ENCODE measurements at regions of chr6 and their contacts with region 1.

Region 1: DNA sequence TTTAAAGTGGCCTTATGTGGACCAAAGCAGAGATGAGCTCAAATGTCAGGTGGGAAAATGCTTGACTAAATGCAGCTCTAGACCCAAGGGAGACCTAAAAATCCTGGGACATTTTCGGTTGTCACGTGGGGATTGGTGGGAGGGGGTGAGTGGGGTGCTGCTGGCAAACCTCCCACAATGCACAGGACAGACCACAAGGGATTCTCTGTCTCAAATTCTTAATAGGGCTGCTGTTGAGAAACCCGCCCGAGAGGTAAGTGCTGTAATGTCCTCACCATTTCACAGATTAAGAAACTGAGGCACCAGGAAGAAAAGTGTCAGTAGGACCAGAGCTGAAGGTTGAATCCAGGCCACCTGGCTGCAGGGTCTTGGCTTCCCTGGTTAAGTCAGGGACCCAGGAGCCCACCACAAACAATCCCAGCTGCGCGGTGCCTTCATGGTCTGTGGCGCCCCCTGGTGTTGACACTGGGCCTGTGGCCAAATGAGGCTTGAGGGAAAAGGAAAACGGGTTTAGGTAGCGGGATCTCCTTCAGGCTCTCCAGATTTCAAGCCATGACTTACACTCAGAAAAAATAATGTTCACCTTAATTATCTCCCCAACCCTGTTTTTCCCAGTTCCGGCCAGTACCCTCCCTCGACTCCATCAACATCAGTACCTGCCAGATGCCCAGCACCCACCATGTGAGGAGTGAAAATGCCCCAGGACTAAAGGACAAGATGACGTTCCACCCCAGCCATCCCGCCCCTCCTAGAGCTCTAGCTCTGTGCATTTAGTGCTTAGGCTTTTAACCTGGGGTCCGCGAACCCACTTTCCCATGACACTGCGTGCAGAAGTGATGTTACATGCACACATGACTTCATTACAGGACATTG is 7.2 kb downstream of the HLA-G start:
- DNase-seq: peak; percentile 42
- ATAC-seq: peak; percentile 53 to 60

Region 2: GRCh38 chr6:29628419-29629281 is 206.2 kb before region 1 on chr6:
- intact Hi-C with region 1: no loop called
- DNase-seq: peak; percentile 82
- ATAC-seq: peak; percentile 38 to 56

Region 3: DNA sequence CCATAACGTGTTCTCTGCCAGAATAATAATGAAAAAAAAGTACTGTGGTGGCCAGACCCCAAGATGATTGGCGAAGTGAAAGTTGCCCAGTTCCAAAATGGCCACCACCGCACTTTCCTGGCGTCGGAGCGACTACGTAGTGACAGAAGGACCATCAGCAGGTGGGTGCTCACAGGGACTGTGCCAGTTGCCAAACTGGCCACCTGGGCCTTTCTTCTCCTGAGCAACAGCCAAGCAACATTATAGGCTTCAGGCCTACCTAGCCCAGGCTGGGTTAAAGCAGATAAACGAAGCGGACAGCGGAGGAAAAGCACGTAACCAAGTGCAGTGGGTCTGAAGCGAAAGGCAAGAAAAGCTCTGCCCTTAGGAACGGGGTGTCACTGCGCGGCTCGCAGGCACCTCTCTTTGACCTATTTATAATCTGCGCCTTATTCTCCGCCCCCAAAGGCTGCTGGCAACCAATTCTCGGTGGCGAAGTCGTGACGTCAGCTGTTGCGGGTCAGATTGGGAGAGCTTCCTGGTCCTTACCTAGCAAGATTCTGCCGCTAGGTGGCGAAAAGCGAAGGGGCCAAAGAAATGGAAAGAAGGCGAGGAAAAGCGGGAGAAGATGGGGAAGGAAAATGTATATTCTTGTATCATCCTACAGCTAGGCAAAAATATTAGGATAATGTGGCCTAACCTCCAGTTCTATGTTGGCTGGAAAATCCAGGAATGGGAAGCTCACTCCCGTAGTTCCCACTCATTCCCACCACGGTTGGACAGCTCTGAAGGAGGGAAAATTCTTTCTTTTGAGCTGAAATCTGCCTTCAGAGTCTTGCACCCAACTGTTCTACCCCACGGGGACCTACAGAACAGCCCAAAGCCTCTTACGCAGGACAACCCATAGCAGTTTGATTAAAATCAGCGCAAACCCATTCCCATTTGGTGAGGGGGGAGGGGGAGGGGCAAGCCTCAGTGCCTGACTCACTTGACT is 184.8 kb before region 1 on chr6:
- intact Hi-C with region 1: loop called in 1 of 2 experiments (anchors 10 kb)
- DNase-seq: peak; percentile 99
- ATAC-seq: peak; percentile 97 to 99

Region 4: DNA sequence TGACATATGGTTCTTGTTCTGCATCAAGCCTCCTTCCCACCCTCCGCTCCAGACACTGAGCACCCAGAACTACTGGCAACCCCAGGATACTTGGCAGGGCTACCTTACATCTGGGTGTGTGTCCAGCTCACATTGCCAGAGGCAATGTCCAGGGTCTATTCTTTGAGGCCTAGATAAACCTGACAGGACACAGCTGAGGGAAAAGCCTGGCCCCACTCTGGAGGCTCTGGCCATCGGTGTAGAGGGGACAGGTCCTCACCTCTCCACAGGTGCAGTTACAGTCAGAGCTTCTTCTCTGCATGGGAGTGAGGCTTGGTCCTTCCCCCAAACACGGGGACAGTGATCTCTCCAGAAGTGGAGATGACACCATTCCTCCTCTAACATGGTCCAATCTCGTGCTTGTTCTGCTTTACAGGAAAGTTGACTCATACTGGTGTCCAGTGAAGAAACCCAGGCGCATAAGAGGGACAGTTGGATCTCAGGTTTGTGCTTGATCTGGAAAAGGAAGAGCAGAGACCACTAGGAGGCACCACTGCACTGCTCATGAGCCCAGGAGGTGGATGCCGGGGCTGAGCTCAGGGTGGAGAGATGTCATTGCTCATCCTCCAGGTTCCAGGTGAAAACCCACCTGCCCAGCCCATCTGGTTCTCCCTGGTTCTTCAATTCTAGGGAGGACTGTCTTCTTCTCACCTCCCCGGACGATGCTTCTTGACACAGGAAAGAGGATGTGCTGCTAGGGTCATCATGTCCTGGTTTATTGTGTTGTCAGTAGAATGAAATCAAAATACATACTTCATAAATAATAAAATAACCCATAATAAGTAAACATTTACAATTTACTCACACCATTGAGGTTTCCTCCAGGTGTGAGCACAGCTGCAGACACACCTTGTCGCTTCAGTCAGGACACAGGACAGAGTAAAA is 96.8 kb before region 1 on chr6:
- intact Hi-C with region 1: loop called in 1 of 2 experiments (anchors 2 kb)
- DNase-seq: peak; percentile 71
- ATAC-seq: peak; percentile 92 to 93